Thyroid gland (tissue), 4 donors: ENCODE measurements at regions of chr7 and their contacts with region 1.

Region 1: GRCh38 chr7:23181684-23182553 is at the start of gene NUP42:
- DNase-seq: peak; percentile 94 to 95
- H3K4me3 ChIP-seq: peak within 1 kb of the TSS; percentile 81 to 91 (median 82)
- H3K27ac ChIP-seq: peak within 1 kb of the TSS; percentile 80 to 90 (median 81)
- H3K4me1 ChIP-seq: peaks cover 6 to 13% of the 10 kb centered on the region in 2 donors
- H3K27me3 ChIP-seq: no peaks in the 10 kb centered on the region
- CTCF ChIP-seq: peak in 1 of 6 experiments; percentile 21
- POLR2A ChIP-seq: peak in 1 of 2 donors; percentile 82
- total RNA-seq, gene NUP42: 34.2 to 55.8 (median 45.4) TPM

Region 2: DNA sequence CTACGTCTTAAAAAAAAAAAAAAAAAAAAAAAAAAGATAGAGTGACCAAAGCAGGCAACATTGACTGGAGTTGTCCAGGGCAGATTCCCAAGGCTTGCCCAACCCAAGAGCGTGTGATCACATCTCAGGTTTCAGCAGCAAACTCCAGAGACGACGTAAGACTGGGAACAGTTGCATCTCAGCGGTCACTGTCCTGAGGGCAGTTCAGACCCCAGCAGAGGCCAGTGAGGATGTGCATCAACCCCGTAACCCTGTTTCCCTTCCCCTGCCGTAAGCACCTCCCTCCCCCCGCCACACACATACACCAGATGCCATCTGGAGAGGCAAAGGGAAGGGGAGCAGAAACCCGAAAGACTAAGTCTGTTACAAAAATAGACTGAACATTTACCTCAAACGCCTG is 340.0 kb before region 1 on chr7:
- intact Hi-C with region 1: no loop called
- DNase-seq: peak in 1 of 2 donors; percentile 6
- H3K4me3 ChIP-seq: no peak overlapping the region
- H3K27ac ChIP-seq: peak overlapping the region in 1 of 3 donors; percentile 17
- H3K4me1 ChIP-seq: no peaks in the 10 kb centered on the region
- H3K27me3 ChIP-seq: no peaks in the 10 kb centered on the region
- CTCF ChIP-seq: no peak
- POLR2A ChIP-seq: no peak

Region 3: GRCh38 chr7:23105644-23106056 is 76.3 kb before region 1 on chr7 and contains the start of gene KLHL7:
- intact Hi-C with region 1: loop called (anchors 5 kb)
- DNase-seq: peak; percentile 98
- H3K4me3 ChIP-seq: peak within 1 kb of the TSS; percentile 31 to 97 (median 90)
- H3K27ac ChIP-seq: peak within 1 kb of the TSS; percentile 81 to 94 (median 83)
- H3K4me1 ChIP-seq: peaks cover 4 to 12% of the 10 kb centered on the region in 2 donors
- H3K27me3 ChIP-seq: no peaks in the 10 kb centered on the region
- CTCF ChIP-seq: peak in 2 of 6 experiments; percentile 13 to 16
- POLR2A ChIP-seq: peak; percentile 67 to 96
- total RNA-seq, gene KLHL7: 20.3 to 35.0 (median 27.2) TPM

Region 4: GRCh38 chr7:23273141-23273599 is 91.3 kb after region 1 on chr7:
- intact Hi-C with region 1: no loop called
- DNase-seq: peak; percentile 94 to 96
- H3K4me3 ChIP-seq: no peak overlapping the region
- H3K27ac ChIP-seq: no peak overlapping the region
- H3K4me1 ChIP-seq: no peaks in the 10 kb centered on the region
- H3K27me3 ChIP-seq: no peaks in the 10 kb centered on the region
- CTCF ChIP-seq: peak; percentile 68 to 86 (median 80)
- POLR2A ChIP-seq: no peak